ENCODE measurements at regions of chr16 and their contacts with region 1.

Region 1: GRCh38 chr16:23334457-23334853 is 32.4 kb downstream of the SCNN1B start:
- DNase-seq: peak; percentile 93
- ATAC-seq: peak; percentile 68
- H3K4me3 ChIP-seq: 0 out of 2 replicates have a peak overlapping the region, but pooled peaks have one; percentile 5
- H3K27ac ChIP-seq: peak overlapping the region; percentile 57
- H3K4me1 ChIP-seq: peaks cover 31% of the 10 kb centered on the region
- H3K27me3 ChIP-seq: no peaks in the 10 kb centered on the region
- CTCF ChIP-seq: no peak
- EP300 ChIP-seq: peak; percentile 56 to 58; a peak in 2 of 4 replicates
- POLR2A ChIP-seq: no peak
- RAD21 ChIP-seq: no peak

Region 2: GRCh38 chr16:23081675-23082119 is 252.8 kb before region 1 on chr16:
- CTCF ChIA-PET with region 1: no interaction called
- POLR2A ChIA-PET with region 1: no interaction called
- RAD21 ChIA-PET with region 1: no interaction called
- SMC1A ChIA-PET with region 1: no interaction called
- in situ Hi-C with region 1: no loop called
- intact Hi-C with region 1: no loop called
- DNase-seq: no peak
- ATAC-seq: no peak
- H3K4me3 ChIP-seq: no peak overlapping the region
- H3K27ac ChIP-seq: no peak overlapping the region
- H3K4me1 ChIP-seq: no peaks in the 10 kb centered on the region
- H3K27me3 ChIP-seq: no peaks in the 10 kb centered on the region
- CTCF ChIP-seq: no peak
- EP300 ChIP-seq: no peak
- POLR2A ChIP-seq: no peak
- RAD21 ChIP-seq: no peak

Region 3: DNA sequence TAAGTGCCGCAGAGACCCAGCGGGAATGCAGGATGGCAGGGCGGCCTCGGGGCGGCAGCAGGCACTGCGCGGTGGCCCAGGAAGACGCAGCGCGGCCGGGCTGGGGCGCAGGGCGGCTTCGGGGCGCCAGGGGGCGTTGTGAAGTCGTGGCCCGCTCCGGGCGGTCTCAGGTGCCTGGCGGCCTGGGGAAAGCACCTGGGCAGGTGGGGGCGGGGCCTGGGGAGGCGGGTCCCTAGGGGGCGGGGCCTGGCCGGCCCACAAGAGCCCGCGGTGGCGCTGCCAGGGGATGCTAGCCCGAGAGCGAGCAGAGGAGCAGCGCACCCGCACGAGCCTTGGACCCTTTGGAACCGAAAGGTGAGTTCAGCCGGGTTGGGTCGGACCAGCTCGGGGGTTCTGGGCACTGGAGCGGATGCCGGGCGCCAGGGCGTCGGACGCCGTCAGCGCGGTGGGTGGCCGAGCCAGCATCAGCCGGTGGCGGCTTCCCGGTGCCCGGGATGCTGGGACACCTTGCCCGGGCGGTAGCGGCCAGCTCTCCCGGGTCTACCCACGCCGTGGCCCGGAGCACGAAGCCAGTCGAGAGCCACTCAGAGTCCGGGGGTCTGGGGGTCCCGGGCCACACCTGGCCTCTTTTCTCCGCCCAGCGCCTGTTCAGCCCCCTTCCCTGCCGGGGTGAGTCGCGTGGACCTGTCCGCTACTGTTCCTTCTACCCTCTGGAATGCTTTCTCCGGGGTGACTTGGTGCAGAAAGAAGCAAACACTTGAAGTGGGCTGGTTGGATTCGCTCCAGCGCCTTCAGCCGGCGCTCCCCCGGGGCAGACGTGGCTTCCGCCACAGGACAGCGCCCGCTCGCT is 151.8 kb before region 1 on chr16 and contains the start of gene SCNN1G:
- CTCF ChIA-PET with region 1: interaction called, 13 read pairs
- POLR2A ChIA-PET with region 1: interaction called, 5 read pairs
- RAD21 ChIA-PET with region 1: interaction called, 3 read pairs
- SMC1A ChIA-PET with region 1: no interaction called
- in situ Hi-C with region 1: no loop called
- intact Hi-C with region 1: loop called (anchors 5 kb)
- DNase-seq: peak; percentile 23
- ATAC-seq: peak; percentile 98
- H3K4me3 ChIP-seq: no peak within 1 kb of the TSS
- H3K27ac ChIP-seq: no peak within 1 kb of the TSS
- H3K4me1 ChIP-seq: peaks cover 7% of the 10 kb centered on the region
- H3K27me3 ChIP-seq: peaks cover 3 to 7% of the 10 kb centered on the region in 2 experiments; a peak in 3 of 4 replicates
- CTCF ChIP-seq: peak; percentile 95 to 98 (median 96); a peak in 5 of 6 replicates
- EP300 ChIP-seq: no peak
- POLR2A ChIP-seq: no peak
- RAD21 ChIP-seq: peak; percentile 95
- polyA plus RNA-seq, gene SCNN1G: 0.05 TPM in 1 of 2 experiments, not detected in the other

Region 4: DNA sequence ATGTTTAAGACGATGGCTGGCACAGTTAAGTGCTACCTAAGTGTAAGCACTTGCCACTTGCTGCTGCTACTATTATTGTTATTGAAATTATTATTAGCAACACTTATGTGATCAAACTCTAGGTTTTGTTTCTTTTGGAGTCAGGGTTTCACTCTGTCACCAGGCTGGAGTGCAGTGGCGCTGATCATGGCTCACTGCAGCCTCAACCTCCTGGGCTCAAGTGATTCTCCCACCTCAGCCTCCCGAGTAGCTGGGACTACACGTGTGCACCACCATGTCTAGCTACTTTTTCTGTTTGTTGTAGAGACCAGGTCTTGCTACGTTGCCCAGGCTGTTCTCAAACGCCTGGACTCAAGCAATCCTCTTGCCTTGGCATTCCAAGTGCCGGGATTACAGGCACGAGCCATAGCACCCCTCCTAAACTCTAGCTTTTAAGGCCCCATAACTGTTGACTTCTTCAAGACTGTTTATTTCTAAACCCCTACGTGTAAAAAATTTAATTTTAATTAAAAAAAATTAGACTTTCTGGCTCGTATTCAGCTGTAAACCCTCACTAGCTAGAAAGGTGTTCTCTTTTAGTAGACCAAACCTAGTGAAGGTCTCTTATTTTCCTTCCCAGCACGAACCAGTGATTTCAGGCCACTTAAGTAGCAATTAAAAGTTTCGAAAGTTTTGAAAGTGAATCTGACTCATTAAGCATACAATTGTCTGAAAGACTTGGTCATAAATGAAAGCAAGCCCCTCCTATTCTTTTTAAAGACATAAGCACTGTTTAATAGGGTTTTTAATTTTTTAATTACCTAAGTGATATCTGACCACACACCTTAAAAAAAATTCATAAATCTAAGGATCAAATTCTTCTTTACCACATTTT is 44.0 kb before region 1 on chr16:
- CTCF ChIA-PET with region 1: interaction called, 11 read pairs
- POLR2A ChIA-PET with region 1: interaction called, 8 read pairs
- RAD21 ChIA-PET with region 1: interaction called, 12 read pairs
- SMC1A ChIA-PET with region 1: interaction called, 10 read pairs
- in situ Hi-C with region 1: no loop called
- intact Hi-C with region 1: loop called (anchors 2 kb)
- DNase-seq: no peak
- ATAC-seq: peak; percentile 77
- H3K4me3 ChIP-seq: no peak overlapping the region
- H3K27ac ChIP-seq: no peak overlapping the region
- H3K4me1 ChIP-seq: peaks cover 15% of the 10 kb centered on the region
- H3K27me3 ChIP-seq: no peaks in the 10 kb centered on the region
- CTCF ChIP-seq: no peak
- EP300 ChIP-seq: peak in 1 of 2 experiments; percentile 39; a peak in 1 of 4 replicates
- POLR2A ChIP-seq: no peak
- RAD21 ChIP-seq: no peak

Region 5: DNA sequence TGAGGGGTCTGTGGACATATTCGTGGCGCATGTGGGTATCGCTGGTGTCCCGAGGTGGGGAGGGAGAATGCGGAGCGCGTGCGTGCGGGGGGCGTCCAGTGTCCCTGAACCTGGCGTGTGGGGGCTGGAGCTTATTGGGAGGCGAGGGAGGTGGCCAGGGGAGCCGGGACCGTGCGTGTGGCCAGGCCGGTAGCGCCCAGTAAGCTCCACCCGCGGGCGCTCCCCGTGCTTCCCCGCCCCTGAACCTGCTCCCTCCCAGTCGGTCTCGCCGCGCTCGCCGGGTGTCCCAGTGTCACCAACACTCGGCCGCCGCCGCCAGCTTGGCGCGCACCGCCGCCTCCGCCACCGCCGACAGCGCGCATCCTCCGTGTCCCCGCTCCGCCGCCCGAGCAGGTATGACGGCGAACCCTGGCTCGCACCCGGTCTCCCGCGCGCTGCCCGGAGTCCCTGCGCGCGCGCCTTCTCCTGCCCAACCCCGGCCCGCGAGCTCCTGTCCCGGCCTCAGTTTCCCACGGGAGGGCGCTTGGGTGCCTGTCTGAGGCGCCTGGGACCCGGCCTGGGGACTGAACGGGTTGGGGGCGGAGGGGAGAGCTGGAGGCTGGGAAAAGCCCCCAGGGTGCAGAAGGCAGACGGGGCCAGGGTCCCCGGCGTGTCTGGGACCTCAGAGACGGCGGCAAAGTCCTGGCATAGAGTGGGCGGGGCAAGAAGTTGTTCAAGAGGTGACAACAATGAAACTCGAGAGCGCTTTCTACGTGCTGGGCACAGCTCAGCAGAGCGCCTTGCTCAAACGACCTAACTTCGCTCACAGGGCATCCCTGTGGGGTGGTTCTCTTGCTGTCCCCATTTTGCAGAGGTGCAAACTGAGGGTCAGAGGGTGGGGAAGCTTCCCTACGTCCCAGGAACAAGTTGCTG is 32.2 kb before region 1 on chr16 and contains the start of gene SCNN1B:
- CTCF ChIA-PET with region 1: interaction called, 9 read pairs
- POLR2A ChIA-PET with region 1: interaction called, 3 read pairs
- RAD21 ChIA-PET with region 1: interaction called, 30 read pairs
- SMC1A ChIA-PET with region 1: interaction called, 12 read pairs
- in situ Hi-C with region 1: no loop called
- intact Hi-C with region 1: no loop called
- DNase-seq: no peak
- ATAC-seq: peak; percentile 82
- H3K4me3 ChIP-seq: peak within 1 kb of the TSS; percentile 41; the same call in 1 of the 2 replicates
- H3K27ac ChIP-seq: no peak within 1 kb of the TSS
- H3K4me1 ChIP-seq: peaks cover 5% of the 10 kb centered on the region; the same call in 1 of the 2 replicates
- H3K27me3 ChIP-seq: peaks cover 2 to 3% of the 10 kb centered on the region in 2 experiments; a peak in 2 of 4 replicates
- CTCF ChIP-seq: peak in 2 of 3 experiments; percentile 12 to 16; a peak in 2 of 6 replicates
- EP300 ChIP-seq: no peak
- POLR2A ChIP-seq: no peak
- RAD21 ChIP-seq: no peak
- polyA plus RNA-seq, gene SCNN1B: 0.99 to 1.3 TPM

Region 6: GRCh38 chr16:23362460-23363317 is 28.2 kb after region 1 on chr16:
- CTCF ChIA-PET with region 1: interaction called, 4 read pairs
- POLR2A ChIA-PET with region 1: interaction called, 3 read pairs
- RAD21 ChIA-PET with region 1: interaction called, 9 read pairs
- SMC1A ChIA-PET with region 1: interaction called, 25 read pairs
- in situ Hi-C with region 1: no loop called
- intact Hi-C with region 1: no loop called
- DNase-seq: no peak
- ATAC-seq: no peak
- H3K4me3 ChIP-seq: no peak overlapping the region
- H3K27ac ChIP-seq: no peak overlapping the region
- H3K4me1 ChIP-seq: peaks cover 5% of the 10 kb centered on the region
- H3K27me3 ChIP-seq: no peaks in the 10 kb centered on the region
- CTCF ChIP-seq: no peak
- EP300 ChIP-seq: no peak
- POLR2A ChIP-seq: no peak
- RAD21 ChIP-seq: no peak

Region 7: DNA sequence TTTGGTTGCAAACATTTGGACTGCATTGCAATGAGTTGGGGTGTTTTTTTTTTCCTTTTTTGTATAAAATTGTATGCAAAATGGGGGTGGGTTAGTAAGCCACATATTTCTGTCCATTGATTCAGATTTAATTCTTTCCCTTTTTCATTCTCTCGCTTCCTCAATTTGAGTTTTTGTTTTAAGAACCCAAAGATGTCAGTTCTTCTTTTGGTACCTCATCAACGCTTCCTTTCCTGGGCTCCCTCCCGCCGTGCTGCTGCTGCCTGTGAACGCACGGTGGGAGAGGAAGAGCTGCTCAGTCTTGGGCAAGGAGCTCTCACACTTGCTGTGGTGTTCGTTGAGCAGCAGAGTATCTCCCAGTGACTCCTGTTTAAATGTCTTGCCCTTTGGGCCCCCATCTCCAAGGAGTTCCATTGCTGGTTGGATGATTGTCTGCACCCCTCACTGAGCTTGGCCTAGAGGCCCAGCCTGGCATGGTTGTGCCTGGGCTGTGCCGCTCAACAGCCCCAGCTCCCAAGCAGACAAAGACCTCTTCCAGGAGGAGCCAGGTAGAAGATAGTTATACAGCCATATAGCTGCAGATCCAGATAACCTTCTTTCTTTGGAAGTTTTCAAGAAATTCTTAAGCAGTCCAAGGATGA is 236.7 kb after region 1 on chr16:
- CTCF ChIA-PET with region 1: no interaction called
- POLR2A ChIA-PET with region 1: no interaction called
- RAD21 ChIA-PET with region 1: no interaction called
- SMC1A ChIA-PET with region 1: no interaction called
- in situ Hi-C with region 1: no loop called
- intact Hi-C with region 1: no loop called
- DNase-seq: no peak
- ATAC-seq: peak; percentile 38; the same call in 2 of the 3 replicates
- H3K4me3 ChIP-seq: no peak overlapping the region
- H3K27ac ChIP-seq: no peak overlapping the region
- H3K4me1 ChIP-seq: peaks cover 14% of the 10 kb centered on the region
- H3K27me3 ChIP-seq: no peaks in the 10 kb centered on the region
- CTCF ChIP-seq: no peak
- EP300 ChIP-seq: no peak
- POLR2A ChIP-seq: no peak
- RAD21 ChIP-seq: no peak

Measured in GM12878 (cell line).